Esophagus squamous epithelium (tissue), 5 donors: ENCODE measurements at regions of chr6 and their contacts with region 1.

Region 1: DNA sequence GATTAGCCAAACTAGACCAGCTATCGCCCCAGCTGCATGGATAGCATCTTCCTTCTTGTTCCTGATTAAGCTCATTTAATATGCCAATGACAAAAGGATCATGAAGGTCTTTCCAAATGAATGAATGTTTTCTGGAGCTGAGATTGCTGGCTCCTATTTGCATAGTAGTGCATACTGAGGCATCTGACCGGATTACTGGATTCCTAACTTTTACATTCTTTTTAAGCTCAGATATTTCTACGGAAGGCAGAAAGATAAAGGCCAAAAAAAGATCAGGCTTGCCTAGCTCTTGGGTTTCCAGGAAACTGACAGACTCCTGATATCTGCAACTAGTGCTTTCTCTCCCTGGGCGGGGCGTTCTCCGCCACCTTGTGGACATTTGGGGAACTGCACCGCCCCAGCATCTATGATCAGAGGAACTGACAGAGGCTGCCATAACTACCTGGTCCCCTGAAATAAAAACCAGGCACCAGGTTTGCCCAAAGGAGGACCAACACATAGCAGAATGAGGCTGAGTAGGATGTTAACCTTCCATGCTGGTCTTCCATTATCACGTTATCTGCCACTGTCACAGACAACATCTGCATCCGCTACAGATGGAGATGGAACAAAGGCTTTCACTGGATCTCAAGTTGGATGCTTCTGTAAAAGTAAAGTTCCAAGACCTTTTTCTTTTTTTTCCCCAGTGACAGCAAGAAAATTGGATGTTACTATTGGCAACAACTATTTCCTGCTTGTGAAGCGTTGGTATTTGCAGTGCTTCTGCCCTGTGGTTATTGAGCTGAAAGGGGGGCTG is 33.2 kb downstream of the NT5E start:
- DNase-seq: no peak
- H3K4me3 ChIP-seq: no peak overlapping the region
- H3K27ac ChIP-seq: peak overlapping the region in 1 of 4 donors; percentile 6
- H3K4me1 ChIP-seq: peaks cover 0 to 8% (median 0%) of the 10 kb centered on the region in 3 donors
- H3K27me3 ChIP-seq: no peaks in the 10 kb centered on the region
- CTCF ChIP-seq: peak; percentile 98 to 100 (median 99)
- POLR2A ChIP-seq: no peak

Region 2: DNA sequence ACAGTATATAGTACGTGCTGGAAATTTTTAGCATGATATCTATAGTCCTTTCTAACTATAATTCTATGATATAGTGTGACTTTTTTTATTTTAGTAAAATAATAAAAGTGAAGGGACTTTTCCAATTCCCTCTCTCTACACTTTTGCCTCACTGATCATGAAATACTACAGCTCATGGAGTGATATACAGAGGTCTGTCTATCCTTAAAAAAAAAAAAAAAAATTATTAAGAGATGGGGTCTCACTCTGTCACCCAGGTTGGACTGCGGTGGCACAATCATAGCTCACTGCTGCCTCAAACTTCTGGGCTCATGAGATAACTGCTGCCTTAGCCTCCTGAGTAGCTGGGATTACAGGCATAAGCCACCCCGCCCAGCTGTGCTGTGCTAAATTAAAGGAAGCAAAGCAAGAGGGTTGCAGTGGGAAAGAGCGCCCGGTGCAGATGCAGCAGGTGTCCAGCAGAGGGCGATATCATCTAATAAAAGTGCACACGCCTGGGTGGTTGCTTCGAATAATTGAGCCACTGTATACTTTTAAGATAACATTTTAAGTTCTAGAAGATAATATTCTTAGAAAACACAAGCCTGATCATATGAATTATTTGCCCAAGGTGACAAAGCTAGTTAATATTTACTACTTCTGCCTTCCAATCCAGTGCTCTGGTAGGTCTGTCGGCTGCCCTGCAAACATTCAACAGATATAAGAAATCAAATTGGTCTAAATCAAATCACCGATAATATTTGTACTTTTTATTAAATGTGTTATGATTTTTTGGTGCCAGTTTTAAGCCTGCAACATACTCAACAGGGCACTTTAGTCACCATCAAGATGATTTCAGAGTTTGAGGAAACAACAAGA is 128.1 kb before region 1 on chr6:
- intact Hi-C with region 1: loop called (anchors 2 kb)
- DNase-seq: no peak
- H3K4me3 ChIP-seq: no peak overlapping the region
- H3K27ac ChIP-seq: no peak overlapping the region
- H3K4me1 ChIP-seq: no peaks in the 10 kb centered on the region
- H3K27me3 ChIP-seq: peaks cover 0 to 6% (median 0%) of the 10 kb centered on the region in 4 donors
- CTCF ChIP-seq: peak; percentile 88 to 97 (median 96)
- POLR2A ChIP-seq: no peak